ENCODE measurements at regions of chr5 and their contacts with region 1.

Region 1: DNA sequence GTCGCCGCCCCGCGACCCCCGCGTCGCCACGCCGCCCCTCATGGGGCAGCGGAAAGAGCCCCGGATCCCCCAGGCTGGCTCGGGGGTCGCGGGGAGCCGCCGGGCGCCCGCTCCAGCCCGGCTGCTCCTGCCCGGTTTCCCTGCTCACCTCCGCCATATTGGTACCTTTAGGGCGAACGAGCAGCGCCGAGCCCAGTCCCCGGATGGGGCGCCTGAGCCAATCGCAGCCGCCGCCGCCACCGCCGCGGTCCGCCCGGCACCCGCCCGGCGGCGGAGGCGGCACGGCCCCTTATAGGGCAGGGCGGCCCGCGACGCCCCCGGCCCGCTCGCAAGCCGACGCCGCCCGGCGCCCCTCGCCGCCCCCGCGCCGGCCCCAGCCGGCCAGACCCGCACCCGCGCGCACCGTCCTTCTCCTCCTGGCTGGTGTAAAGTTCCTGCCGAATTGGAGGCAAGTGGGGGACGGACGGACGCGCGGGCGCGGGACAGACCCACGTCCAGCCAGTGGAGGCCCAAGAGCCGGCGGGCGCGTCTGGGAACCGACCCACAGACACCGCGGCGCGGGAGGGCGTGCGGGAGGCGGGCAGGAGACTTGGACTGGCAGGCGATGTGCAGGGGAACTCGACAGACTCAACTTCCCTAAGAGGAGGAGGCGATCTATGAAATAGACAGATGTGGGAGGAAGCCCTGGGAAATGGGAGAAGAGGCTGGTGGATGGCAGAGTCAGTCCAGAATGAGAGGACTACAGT is at the start of gene MIER3:
- DNase-seq: peak; percentile 95
- H3K4me3 Mint-ChIP-seq: peak within 1 kb of the TSS; percentile 98
- H3K27ac Mint-ChIP-seq: peak within 1 kb of the TSS; percentile 90
- H3K4me1 Mint-ChIP-seq: peaks cover 20% of the 10 kb centered on the region
- H3K27me3 Mint-ChIP-seq: peaks cover 39% of the 10 kb centered on the region
- total RNA-seq, gene MIER3: 35.4 and 37.6 TPM in 2 replicates

Region 2: DNA sequence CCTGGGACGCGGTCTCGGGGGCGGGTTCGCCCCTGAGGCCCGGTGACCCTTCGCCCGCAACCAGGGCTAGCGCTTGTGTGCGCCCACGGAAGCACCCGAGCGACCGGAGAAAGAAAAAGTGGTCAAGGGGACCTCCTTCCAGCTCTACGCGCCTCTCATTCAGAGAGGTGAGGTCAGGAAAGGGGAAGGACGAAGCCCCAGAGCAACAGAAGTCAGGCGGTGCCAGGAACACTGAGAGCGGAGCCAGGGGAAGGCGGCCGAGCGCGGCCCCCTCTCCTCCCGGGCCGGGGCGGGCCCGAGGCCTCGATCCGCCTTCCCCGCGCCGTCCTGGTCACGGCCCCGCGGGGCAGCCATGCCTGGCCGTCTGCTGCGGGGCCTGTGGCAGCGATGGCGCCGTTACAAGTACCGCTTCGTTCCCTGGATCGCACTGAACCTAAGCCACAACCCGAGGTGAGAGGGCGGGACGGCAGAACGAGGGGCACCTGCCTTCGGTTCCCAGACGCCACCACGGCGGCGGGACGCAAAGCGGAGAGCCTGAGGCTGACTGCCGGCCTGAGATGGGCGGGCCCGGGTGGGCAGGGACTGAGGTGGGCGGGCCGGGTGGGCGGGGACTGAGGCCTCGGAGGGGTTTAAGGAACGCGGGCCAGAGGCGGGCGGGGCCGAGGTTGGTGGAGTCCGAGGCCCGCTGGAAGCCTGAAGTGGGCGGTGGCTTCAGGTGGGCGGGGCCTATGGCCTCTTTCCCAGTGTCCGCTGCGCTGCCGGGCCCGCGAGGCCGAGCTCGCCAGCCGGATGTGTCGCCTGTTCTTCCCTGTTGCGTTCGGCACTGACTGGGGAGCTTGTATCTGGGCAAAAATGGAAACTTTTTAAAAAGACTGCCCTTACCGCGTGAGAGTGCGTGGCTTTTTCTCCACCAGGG is 42.6 kb before region 1 on chr5 and contains the start of gene SETD9:
- intact Hi-C with region 1: loop called (anchors 1 kb)
- DNase-seq: peak; percentile 98
- H3K4me3 Mint-ChIP-seq: peak within 1 kb of the TSS; percentile 92
- H3K27ac Mint-ChIP-seq: peak within 1 kb of the TSS; percentile 98
- H3K4me1 Mint-ChIP-seq: peaks cover 21% of the 10 kb centered on the region
- H3K27me3 Mint-ChIP-seq: peaks cover 18% of the 10 kb centered on the region
- total RNA-seq, gene SETD9: 15.9 and 17.0 TPM in 2 replicates

Region 3: GRCh38 chr5:57117596-57117995 is 165.5 kb after region 1 on chr5:
- intact Hi-C with region 1: loop called (anchors 5 kb)
- DNase-seq: peak; percentile 91
- H3K4me3 Mint-ChIP-seq: peak overlapping the region; percentile 0
- H3K27ac Mint-ChIP-seq: peak overlapping the region; percentile 60
- H3K4me1 Mint-ChIP-seq: peaks cover 21% of the 10 kb centered on the region
- H3K27me3 Mint-ChIP-seq: no peaks in the 10 kb centered on the region

Region 4: DNA sequence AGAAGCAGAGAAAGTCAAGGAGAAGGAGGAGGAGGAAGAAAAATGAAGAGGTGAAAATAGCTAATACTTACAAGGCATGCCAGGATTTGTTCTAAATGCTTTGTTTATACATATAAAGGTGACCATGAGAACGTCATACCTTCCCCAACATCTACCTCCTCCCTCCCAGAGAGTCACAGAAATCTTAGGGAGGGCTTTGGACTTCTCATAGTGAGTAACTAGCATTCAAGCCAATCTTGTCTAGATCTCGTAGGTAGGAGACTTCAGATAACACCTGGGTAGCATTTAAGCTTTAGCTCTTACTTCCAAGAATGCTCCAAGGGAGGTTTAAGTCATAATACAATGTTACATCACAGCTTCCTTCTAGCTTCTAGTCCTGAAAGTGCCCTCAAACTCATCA is 185.3 kb after region 1 on chr5:
- intact Hi-C with region 1: loop called (anchors 1 kb)
- DNase-seq: no peak
- H3K4me3 Mint-ChIP-seq: no peak overlapping the region
- H3K27ac Mint-ChIP-seq: no peak overlapping the region
- H3K4me1 Mint-ChIP-seq: no peaks in the 10 kb centered on the region
- H3K27me3 Mint-ChIP-seq: peaks cover 27% of the 10 kb centered on the region